ENCODE measurements at regions of chr12 and their contacts with region 1.

Region 1: GRCh38 chr12:120886199-120887018 is 17.7 kb downstream of the SPPL3 start:
- DNase-seq: peak; percentile 68
- ATAC-seq: peak; percentile 90
- H3K4me3 ChIP-seq: no peak overlapping the region
- H3K27ac ChIP-seq: peak overlapping the region; percentile 84
- H3K4me1 ChIP-seq: peaks cover 20% of the 10 kb centered on the region; the same call in 1 of the 2 replicates
- H3K27me3 ChIP-seq: no peaks in the 10 kb centered on the region
- CTCF ChIP-seq: no peak
- EP300 ChIP-seq: 0 out of 4 replicates have a peak, but pooled peaks of 1 of the 2 experiments have one; percentile 13
- POLR2A ChIP-seq: no peak
- RAD21 ChIP-seq: no peak

Region 2: DNA sequence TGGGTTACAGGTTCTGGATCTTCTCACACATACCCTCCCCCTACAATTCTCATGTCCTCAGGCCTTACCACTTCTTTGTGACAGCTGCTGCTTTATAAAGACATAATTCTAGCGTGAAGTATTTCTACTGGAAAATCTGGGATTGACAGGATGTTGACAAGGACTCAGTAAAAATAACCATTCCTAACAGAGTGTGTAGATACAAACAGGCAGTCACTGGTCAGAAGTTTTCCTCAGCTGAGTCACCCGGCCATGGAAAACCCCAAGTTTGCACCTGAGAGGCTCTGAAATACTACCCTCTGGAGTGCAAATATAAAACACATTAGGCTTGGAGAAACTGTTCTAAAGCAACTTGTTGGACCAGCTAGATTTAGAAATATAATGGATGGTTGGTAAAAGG is 36.6 kb before region 1 on chr12:
- CTCF ChIA-PET with region 1: interaction called, 4 read pairs
- POLR2A ChIA-PET with region 1: interaction called, 7 read pairs
- RAD21 ChIA-PET with region 1: interaction called, 9 read pairs
- SMC1A ChIA-PET with region 1: interaction called, 21 read pairs
- in situ Hi-C with region 1: no loop called
- intact Hi-C with region 1: no loop called
- DNase-seq: no peak
- ATAC-seq: no peak
- H3K4me3 ChIP-seq: no peak overlapping the region
- H3K27ac ChIP-seq: peak overlapping the region; percentile 54
- H3K4me1 ChIP-seq: peaks cover 68% of the 10 kb centered on the region
- H3K27me3 ChIP-seq: no peaks in the 10 kb centered on the region
- CTCF ChIP-seq: no peak
- EP300 ChIP-seq: no peak
- POLR2A ChIP-seq: no peak
- RAD21 ChIP-seq: no peak

Region 3: DNA sequence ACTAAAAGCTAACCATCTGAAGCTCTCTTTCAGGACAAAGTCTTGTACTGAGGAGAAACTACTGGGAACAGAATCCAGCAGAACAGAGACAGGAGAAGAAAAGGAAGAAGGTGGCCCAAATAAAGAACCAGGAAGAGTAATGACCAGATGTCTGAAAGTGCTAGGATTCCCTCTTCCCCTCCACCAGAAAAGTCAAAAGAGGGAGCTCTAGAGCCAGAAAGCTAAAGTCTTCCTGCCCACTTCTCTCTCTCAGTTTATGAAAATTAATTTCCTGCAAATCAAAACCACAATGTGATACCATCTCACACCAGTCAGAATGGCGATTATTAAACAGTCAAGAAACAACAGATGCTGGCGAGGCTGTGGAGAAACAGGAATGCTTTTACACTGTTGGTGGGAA is 29.4 kb before region 1 on chr12:
- CTCF ChIA-PET with region 1: interaction called, 19 read pairs
- POLR2A ChIA-PET with region 1: no interaction called
- RAD21 ChIA-PET with region 1: interaction called, 9 read pairs
- SMC1A ChIA-PET with region 1: interaction called, 21 read pairs
- in situ Hi-C with region 1: no loop called
- intact Hi-C with region 1: no loop called
- DNase-seq: no peak
- ATAC-seq: no peak; the same call in 2 of the 3 replicates
- H3K4me3 ChIP-seq: no peak overlapping the region
- H3K27ac ChIP-seq: peak overlapping the region; percentile 27; the same call in 1 of the 2 replicates
- H3K4me1 ChIP-seq: peaks cover 32% of the 10 kb centered on the region
- H3K27me3 ChIP-seq: no peaks in the 10 kb centered on the region
- CTCF ChIP-seq: peak; percentile 30 to 52 (median 34); a peak in 4 of 6 replicates
- EP300 ChIP-seq: no peak
- POLR2A ChIP-seq: no peak
- RAD21 ChIP-seq: peak; percentile 63

Region 4: GRCh38 chr12:120866108-120866507 is 20.3 kb before region 1 on chr12:
- CTCF ChIA-PET with region 1: interaction called, 5 read pairs
- POLR2A ChIA-PET with region 1: interaction called, 7 read pairs
- RAD21 ChIA-PET with region 1: interaction called, 5 read pairs
- SMC1A ChIA-PET with region 1: interaction called, 20 read pairs
- in situ Hi-C with region 1: no loop called
- intact Hi-C with region 1: no loop called
- DNase-seq: no peak
- ATAC-seq: no peak
- H3K4me3 ChIP-seq: no peak overlapping the region
- H3K27ac ChIP-seq: no peak overlapping the region
- H3K4me1 ChIP-seq: peaks cover 5% of the 10 kb centered on the region; the same call in 1 of the 2 replicates
- H3K27me3 ChIP-seq: no peaks in the 10 kb centered on the region
- CTCF ChIP-seq: no peak
- EP300 ChIP-seq: no peak
- POLR2A ChIP-seq: no peak
- RAD21 ChIP-seq: no peak

Measured in GM12878 (cell line).